B cell (primary cell): ENCODE measurements at regions of chr3 and their contacts with region 1.

Region 1: GRCh38 chr3:23435318-23435717 is 232.2 kb downstream of the UBE2E2 start:
- DNase-seq: no peak
- ATAC-seq: no peak
- H3K4me3 ChIP-seq: no peak overlapping the region
- H3K4me3 Mint-ChIP-seq: no peak overlapping the region
- H3K27ac ChIP-seq: no peak overlapping the region
- H3K27ac Mint-ChIP-seq: no peak overlapping the region
- H3K4me1 ChIP-seq: peaks cover 26 to 34% of the 10 kb centered on the region in 2 donors
- H3K4me1 Mint-ChIP-seq: peaks cover 56% of the 10 kb centered on the region
- H3K27me3 ChIP-seq: no peaks in the 10 kb centered on the region
- H3K27me3 Mint-ChIP-seq: no peaks in the 10 kb centered on the region
- CTCF ChIP-seq: no peak

Region 2: GRCh38 chr3:23324745-23325144 is 110.6 kb before region 1 on chr3:
- CTCF ChIA-PET with region 1: no interaction called
- POLR2A ChIA-PET with region 1: no interaction called
- intact Hi-C with region 1: no loop called
- DNase-seq: peak; percentile 52
- ATAC-seq: peak; percentile 58
- H3K4me3 ChIP-seq: peak overlapping the region in 1 of 5 experiments; percentile 13
- H3K4me3 Mint-ChIP-seq: peak overlapping the region; percentile 63
- H3K27ac ChIP-seq: peak overlapping the region in 1 of 2 donors; percentile 27
- H3K27ac Mint-ChIP-seq: no peak overlapping the region
- H3K4me1 ChIP-seq: peaks cover 7 to 29% of the 10 kb centered on the region in 2 donors
- H3K4me1 Mint-ChIP-seq: peaks cover 52% of the 10 kb centered on the region
- H3K27me3 ChIP-seq: no peaks in the 10 kb centered on the region
- H3K27me3 Mint-ChIP-seq: no peaks in the 10 kb centered on the region
- CTCF ChIP-seq: no peak

Region 3: DNA sequence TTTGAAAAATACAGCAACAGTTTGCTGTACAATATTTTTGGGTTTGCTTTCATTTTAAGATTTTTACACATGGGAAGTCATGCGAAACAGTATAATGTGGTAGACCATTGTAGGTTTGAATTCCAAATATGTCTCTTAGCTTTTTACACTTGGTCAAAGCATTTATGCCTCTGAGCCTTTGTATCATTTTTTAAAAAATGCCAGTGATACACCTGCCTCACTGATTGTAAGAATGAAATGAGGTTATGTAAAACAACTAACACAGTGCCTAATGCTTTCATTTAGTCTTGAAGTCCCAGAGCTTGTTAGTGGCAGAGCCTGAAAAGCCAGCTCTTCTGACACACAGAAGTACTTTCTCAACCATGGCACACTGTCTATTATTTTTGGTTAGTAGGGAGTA is 30.2 kb before region 1 on chr3:
- CTCF ChIA-PET with region 1: no interaction called
- POLR2A ChIA-PET with region 1: no interaction called
- intact Hi-C with region 1: loop called (anchors 1 kb)
- DNase-seq: peak; percentile 28
- ATAC-seq: peak; percentile 51
- H3K4me3 ChIP-seq: peak overlapping the region in 1 of 5 experiments; percentile 2
- H3K4me3 Mint-ChIP-seq: peak overlapping the region; percentile 49
- H3K27ac ChIP-seq: no peak overlapping the region
- H3K27ac Mint-ChIP-seq: no peak overlapping the region
- H3K4me1 ChIP-seq: peaks cover 25 to 37% of the 10 kb centered on the region in 2 donors
- H3K4me1 Mint-ChIP-seq: peaks cover 58% of the 10 kb centered on the region
- H3K27me3 ChIP-seq: no peaks in the 10 kb centered on the region
- H3K27me3 Mint-ChIP-seq: no peaks in the 10 kb centered on the region
- CTCF ChIP-seq: no peak

Region 4: GRCh38 chr3:23567917-23568316 is 132.6 kb after region 1 on chr3:
- CTCF ChIA-PET with region 1: no interaction called
- POLR2A ChIA-PET with region 1: no interaction called
- intact Hi-C with region 1: no loop called
- DNase-seq: no peak
- ATAC-seq: no peak
- H3K4me3 ChIP-seq: no peak overlapping the region
- H3K4me3 Mint-ChIP-seq: no peak overlapping the region
- H3K27ac ChIP-seq: no peak overlapping the region
- H3K27ac Mint-ChIP-seq: no peak overlapping the region
- H3K4me1 ChIP-seq: peaks cover 0 to 6% of the 10 kb centered on the region in 2 donors
- H3K4me1 Mint-ChIP-seq: peaks cover 20% of the 10 kb centered on the region
- H3K27me3 ChIP-seq: no peaks in the 10 kb centered on the region
- H3K27me3 Mint-ChIP-seq: no peaks in the 10 kb centered on the region
- CTCF ChIP-seq: no peak